Dendritic cell treated with granulocyte-macrophage colony-stimulating factor and Interleukin-4, amounts not matched to agents 40 ng/mL and 50 ng/mL, for 4 days (primary cell): ENCODE measurements at regions of chr16 and their contacts with region 1.

Region 1: DNA sequence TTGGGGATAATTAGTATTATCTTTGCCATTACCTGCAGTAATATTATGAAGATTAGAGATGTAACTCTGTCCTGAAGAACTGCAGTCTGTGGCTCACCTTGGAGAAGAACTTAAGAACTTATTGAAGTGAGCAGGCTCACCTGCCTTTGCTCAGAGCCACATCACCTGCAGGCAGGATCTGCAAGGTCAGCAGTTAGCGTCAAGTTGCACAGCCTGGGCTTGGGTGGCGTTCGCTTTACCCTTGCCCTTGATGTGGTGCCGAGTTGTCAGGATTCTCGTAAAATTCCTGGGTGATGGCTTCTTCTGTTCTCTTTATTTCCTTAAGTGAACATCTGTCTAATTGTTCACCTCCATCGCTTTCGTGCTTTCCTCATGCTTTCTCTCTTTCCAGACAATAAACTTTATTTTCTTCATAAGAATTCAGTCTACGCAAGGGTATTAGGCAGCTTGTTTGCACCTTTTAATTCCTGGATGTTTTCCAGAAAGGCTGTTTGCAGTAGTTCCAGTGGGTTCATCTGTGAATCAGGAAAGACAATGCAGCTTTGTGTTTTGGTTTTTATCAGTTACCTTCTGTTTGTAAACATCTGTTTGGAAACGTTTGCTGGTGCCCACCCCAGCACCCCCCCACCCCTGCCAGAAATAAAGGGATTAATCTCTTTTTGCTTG is 254.3 kb downstream of the WWOX start:
- H3K4me3 Mint-ChIP-seq: no peak overlapping the region
- H3K27ac Mint-ChIP-seq: no peak overlapping the region
- H3K4me1 Mint-ChIP-seq: no peaks in the 10 kb centered on the region
- H3K27me3 Mint-ChIP-seq: no peaks in the 10 kb centered on the region

Region 2: GRCh38 chr16:78333808-78334207 is 19.9 kb before region 1 on chr16:
- intact Hi-C with region 1: loop called (anchors 1 kb)
- H3K4me3 Mint-ChIP-seq: no peak overlapping the region
- H3K27ac Mint-ChIP-seq: no peak overlapping the region
- H3K4me1 Mint-ChIP-seq: no peaks in the 10 kb centered on the region
- H3K27me3 Mint-ChIP-seq: no peaks in the 10 kb centered on the region